ENCODE measurements at regions of chr5 and their contacts with region 1.

Region 1: DNA sequence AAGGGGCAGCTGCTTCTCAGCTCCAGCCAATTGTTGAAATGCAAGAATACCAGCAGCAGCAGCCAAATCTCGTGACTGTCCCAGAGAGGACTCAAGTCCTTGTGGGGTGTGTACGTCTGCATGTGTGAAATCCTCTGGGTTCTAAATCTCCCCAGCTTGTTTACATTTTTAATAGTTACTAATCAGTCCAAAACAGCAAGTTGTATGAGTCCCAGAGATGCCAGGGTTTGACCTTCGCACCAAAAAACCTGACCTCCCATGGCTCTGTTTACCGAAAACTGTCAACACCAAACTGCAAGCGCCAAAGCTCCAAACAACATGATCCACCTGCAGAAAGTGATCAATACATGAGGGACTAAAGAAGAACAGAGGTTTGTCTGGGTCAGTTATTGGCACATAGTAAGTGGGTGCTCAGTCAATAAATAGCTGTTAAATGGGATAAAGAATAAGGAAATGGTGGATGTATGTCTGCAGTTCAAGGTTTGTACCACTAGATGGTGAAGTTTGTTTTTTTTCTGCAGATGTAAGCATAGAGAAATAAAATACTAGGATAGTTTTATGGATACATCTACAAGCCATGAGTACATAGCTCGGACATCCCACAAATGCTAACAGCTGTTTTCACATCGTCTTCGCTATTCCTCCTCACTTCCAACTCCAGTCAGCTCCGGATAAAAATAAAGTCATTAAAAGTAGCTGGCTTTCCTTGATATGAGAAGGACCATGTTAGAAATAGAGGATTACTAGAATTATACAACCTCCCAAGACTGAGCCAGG is 85.3 kb upstream of the ADRB2 start:
- DNase-seq: no peak
- ATAC-seq: peak; percentile 90 to 95 (median 91)
- H3K4me3 ChIP-seq: peak overlapping the region; percentile 39
- H3K27ac ChIP-seq: peak overlapping the region; percentile 56
- H3K4me1 ChIP-seq: peaks cover 8% of the 10 kb centered on the region
- H3K27me3 ChIP-seq: no peaks in the 10 kb centered on the region
- CTCF ChIP-seq: peak; percentile 82

Region 2: GRCh38 chr5:148820461-148821395 is 79.6 kb after region 1 on chr5:
- intact Hi-C with region 1: loop called in 1 of 2 experiments (anchors 5 kb)
- DNase-seq: no peak
- ATAC-seq: peak in 1 of 4 donors; percentile 62
- H3K4me3 ChIP-seq: no peak overlapping the region
- H3K27ac ChIP-seq: no peak overlapping the region
- H3K4me1 ChIP-seq: peaks cover 8% of the 10 kb centered on the region
- H3K27me3 ChIP-seq: no peaks in the 10 kb centered on the region
- CTCF ChIP-seq: peak; percentile 59

Region 3: DNA sequence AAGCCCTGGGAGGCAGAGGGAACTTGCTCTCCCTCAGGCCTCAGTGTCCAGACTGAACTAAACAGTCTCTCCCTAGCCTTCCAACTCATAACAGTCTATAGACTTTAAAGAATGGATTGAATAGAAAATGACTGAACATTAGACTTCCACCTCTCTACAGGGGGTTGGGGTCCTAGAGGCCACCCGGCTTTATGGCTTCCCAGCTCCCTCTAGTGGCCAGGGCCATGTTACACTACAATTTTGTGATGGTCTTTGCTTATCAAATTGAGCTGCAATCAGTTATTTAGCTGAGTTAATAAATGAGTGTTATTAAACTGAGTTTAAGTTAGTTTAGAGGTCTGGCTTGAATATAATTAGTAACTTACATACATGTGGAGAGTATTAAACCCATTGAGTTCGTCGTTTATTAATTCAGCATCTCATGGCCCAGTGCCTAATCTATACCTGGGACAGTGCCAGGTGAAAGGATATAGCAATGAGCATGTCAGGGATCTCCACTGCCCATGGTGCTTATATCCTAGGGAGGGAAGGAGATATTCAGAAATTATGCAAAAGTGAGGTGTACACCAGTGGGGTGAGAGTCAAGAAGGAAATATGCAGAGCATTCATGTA is 216.5 kb after region 1 on chr5:
- intact Hi-C with region 1: loop called in 1 of 2 experiments (anchors 5 kb)
- DNase-seq: no peak
- ATAC-seq: peak in 2 of 4 donors; percentile 50 to 65
- H3K4me3 ChIP-seq: no peak overlapping the region
- H3K27ac ChIP-seq: no peak overlapping the region
- H3K4me1 ChIP-seq: peaks cover 5% of the 10 kb centered on the region
- H3K27me3 ChIP-seq: no peaks in the 10 kb centered on the region
- CTCF ChIP-seq: peak; percentile 84

Region 4: DNA sequence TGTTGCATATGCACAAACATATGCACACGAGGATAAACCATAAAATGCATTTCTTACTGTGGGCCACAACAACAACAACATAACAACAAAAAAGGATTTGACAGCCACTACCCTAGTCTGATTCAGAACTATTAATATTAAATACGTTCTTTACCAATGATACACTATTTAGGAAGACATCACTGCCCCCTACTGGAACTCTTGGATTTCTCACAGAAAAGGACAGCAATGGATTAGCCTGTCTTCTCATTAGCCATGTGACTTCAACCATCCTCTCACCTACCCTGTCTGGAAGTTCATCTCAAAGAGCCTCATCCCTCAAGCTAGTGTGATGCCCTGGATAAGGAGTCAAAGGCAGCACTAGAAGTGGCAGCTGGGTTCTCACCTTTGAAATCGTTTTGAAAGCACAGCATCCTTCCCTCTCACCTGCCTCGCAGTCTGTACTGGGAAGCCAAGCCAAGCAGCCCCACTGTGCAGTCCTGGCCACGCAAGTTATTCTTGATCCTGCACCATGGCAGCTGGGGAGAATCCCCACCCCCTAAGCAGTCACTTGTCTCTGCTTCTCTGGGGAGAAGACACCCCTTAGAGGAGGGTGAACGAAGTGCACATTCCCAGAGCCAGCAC is 257.1 kb after region 1 on chr5:
- intact Hi-C with region 1: loop called (anchors 5 to 10 kb)
- DNase-seq: no peak
- ATAC-seq: peak; percentile 57 to 76 (median 65)
- H3K4me3 ChIP-seq: no peak overlapping the region
- H3K27ac ChIP-seq: no peak overlapping the region
- H3K4me1 ChIP-seq: peaks cover 45% of the 10 kb centered on the region
- H3K27me3 ChIP-seq: no peaks in the 10 kb centered on the region
- CTCF ChIP-seq: peak; percentile 75

Region 5: GRCh38 chr5:149222914-149223848 is 482.0 kb after region 1 on chr5:
- intact Hi-C with region 1: no loop called
- DNase-seq: no peak
- ATAC-seq: no peak
- H3K4me3 ChIP-seq: no peak overlapping the region
- H3K27ac ChIP-seq: no peak overlapping the region
- H3K4me1 ChIP-seq: no peaks in the 10 kb centered on the region
- H3K27me3 ChIP-seq: no peaks in the 10 kb centered on the region
- CTCF ChIP-seq: no peak

Region 6: GRCh38 chr5:149406203-149406978 is 665.2 kb after region 1 on chr5:
- intact Hi-C with region 1: no loop called
- DNase-seq: peak in 1 of 2 donors; percentile 68
- ATAC-seq: peak; percentile 43 to 61 (median 46)
- H3K4me3 ChIP-seq: peak overlapping the region; percentile 59
- H3K27ac ChIP-seq: peak overlapping the region; percentile 66
- H3K4me1 ChIP-seq: no peaks in the 10 kb centered on the region
- H3K27me3 ChIP-seq: no peaks in the 10 kb centered on the region
- CTCF ChIP-seq: no peak